ENCODE measurements at regions of chr1 and their contacts with region 1.

Region 1: DNA sequence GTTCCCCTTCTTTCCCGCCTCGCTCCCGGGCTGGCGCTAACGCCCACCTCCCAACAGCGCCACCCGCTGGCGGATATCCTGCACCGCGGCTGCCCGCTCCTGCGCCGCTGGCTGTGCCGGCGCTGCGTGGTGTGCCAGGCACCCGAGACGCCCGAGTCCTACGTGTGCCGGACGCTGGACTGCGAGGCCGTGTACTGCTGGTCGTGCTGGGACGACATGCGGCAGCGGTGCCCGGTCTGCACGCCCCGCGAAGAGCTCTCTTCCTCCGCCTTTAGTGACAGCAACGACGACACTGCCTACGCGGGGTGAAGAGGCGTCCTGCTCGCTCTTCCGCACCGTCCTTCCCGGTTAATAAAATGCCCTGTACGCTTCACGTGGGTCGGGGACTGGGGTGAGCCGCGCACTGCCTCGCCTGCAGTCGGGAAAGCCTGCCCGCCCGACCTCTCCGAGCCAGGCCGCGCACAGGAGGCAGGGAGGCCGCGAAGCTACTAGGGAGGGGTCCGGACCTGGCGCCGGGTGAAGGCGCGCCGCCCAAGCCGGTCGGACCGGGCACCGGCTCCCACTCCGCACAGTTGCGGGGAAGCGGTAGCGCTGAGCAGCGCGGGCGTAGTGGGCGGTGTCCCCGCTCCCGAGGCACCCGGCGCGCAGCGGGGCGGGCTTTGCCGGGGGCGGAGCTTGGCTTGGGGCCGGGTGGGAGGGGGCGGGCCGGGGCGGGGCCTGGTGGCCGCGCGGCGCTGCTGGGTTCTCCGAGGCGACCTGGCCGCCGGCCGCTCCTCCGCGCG is at the start of gene ADAM15:
- DNase-seq: peak; percentile 90
- ATAC-seq: peak; percentile 78
- H3K4me3 Mint-ChIP-seq: peak within 1 kb of the TSS; percentile 74
- H3K27ac Mint-ChIP-seq: peak within 1 kb of the TSS; percentile 80
- H3K4me1 Mint-ChIP-seq: peaks cover 20% of the 10 kb centered on the region
- H3K27me3 Mint-ChIP-seq: no peaks in the 10 kb centered on the region
- total RNA-seq, gene ADAM15: 42.4 to 48.8 TPM

Region 2: DNA sequence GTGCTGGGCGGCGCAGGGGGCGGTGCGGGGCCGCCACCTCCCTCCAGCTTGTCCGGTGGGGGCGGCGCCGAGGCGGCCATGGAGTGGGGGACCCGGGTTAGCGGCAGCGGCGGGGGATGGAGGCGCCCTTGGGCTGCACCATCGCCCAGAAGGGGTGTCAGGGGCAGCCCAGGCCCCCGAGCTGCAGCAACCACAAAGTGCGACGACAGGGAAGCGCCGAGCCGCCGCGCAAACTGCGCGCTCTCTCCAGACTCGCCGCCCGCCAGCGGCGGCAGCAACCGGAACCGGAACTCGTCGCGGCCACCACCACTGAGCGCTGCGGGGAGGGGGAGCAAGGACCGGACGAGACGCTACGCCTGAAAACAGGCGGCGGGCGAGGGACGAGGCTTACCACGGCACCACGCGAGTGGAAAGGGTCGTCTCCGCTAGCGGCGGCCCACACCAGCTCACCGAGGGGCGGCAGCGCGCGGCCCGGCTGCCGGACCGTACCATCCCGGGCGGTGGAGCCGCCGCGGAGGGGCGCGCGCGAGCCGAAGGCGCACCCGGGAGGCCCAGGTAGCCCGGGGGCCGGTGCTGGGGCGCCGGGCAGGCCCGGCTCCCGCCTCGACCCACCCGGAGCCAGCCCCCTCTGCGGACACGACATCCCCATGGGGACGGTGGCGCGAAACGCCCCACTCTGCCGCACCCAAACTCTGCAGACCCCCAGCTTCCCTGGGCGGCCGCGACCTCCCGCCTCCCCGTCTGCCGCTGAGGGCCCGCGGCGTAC is 89.1 kb before region 1 on chr1 and contains the start of gene PYGO2:
- CTCF ChIA-PET with region 1: interaction called, 3 read pairs
- POLR2A ChIA-PET with region 1: no interaction called
- intact Hi-C with region 1: loop called in 1 of 2 experiments (anchors 1 kb)
- DNase-seq: peak; percentile 90
- ATAC-seq: peak; percentile 81
- H3K4me3 Mint-ChIP-seq: peak within 1 kb of the TSS; percentile 91
- H3K27ac Mint-ChIP-seq: peak within 1 kb of the TSS; percentile 93
- H3K4me1 Mint-ChIP-seq: peaks cover 43% of the 10 kb centered on the region
- H3K27me3 Mint-ChIP-seq: no peaks in the 10 kb centered on the region
- total RNA-seq, gene PYGO2: 24.5 to 25.6 TPM

Region 3: GRCh38 chr1:155017041-155017945 is 33.5 kb before region 1 on chr1:
- CTCF ChIA-PET with region 1: interaction called, 9 read pairs
- POLR2A ChIA-PET with region 1: no interaction called
- intact Hi-C with region 1: loop called (anchors 1 to 5 kb)
- DNase-seq: peak; percentile 97
- ATAC-seq: peak; percentile 87
- H3K4me3 Mint-ChIP-seq: peak overlapping the region; percentile 53
- H3K27ac Mint-ChIP-seq: peak overlapping the region; percentile 69
- H3K4me1 Mint-ChIP-seq: peaks cover 69% of the 10 kb centered on the region
- H3K27me3 Mint-ChIP-seq: no peaks in the 10 kb centered on the region

Region 4: DNA sequence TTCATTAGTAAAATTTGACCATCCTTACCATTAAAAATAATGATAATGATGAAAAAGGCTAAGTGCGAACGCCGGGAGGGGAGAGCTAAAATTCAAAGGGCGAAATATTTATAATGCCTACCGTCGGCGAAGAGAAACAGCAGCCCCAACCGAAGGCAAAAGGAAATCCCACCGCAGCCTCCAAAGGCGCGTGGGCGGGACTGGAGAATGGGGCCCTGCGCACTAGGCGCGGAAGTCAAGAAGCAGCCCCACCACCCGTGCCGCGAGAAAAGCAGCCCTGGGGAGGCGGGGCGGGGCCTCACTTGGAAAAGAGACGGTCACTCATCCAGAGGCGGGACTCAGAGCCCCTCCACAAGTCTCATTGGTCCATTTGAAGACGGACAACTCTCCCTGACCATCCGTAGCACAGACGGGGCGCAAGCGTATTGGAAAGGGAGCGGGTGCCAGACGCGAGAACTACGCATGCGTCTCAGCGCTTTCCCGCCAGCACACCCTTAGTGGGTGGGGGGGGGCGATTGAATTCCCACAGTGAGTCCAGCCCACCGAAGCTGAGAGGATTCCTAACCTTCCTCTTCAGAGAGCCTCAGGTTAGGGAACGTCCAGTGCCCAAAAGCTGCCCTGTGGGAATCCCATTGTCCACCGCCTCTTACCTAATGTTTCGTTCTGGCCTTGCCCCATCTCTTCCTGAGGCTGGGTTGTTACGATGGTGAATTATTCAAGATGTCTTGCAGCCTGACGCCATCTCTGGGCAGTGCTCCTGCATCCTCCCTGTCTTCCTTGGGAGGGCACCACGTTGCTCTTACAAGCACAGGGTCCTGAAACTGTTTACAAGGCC is 176.7 kb after region 1 on chr1:
- CTCF ChIA-PET with region 1: no interaction called
- POLR2A ChIA-PET with region 1: no interaction called
- intact Hi-C with region 1: loop called in 1 of 2 experiments (anchors 1 kb)
- DNase-seq: peak; percentile 99
- ATAC-seq: peak; percentile 98
- H3K4me3 Mint-ChIP-seq: peak overlapping the region; percentile 96
- H3K27ac Mint-ChIP-seq: peak overlapping the region; percentile 97
- H3K4me1 Mint-ChIP-seq: peaks cover 27% of the 10 kb centered on the region
- H3K27me3 Mint-ChIP-seq: no peaks in the 10 kb centered on the region

Measured in activated CD4-positive, alpha-beta T cell treated with anti-CD3 and anti-CD28 coated beads for 36 hours (primary cell).